Caco-2 (cell line): ENCODE measurements at regions of chr4 and their contacts with region 1.

Region 1: DNA sequence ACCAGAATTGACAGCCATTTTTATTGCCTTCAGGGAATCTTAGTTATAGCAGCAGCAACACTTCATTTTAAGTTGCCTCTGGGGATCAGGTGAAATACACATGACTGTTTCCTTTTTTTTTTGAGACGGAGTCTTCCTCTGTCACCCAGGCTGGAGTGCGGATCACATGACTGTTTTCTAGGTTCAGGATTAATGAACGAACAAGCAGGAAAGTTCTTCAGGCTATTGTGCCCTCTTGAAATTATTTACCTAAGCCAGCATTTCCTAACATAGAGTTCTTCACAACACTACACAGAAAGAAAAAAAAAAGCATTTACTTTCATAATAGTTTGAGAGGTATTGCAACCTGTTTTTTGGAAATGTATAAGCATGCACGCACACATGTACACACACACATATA is 2032.8 kb downstream of the PCDH7 start:
- DNase-seq: no peak
- H3K4me3 ChIP-seq: no peak overlapping the region
- H3K4me3 Mint-ChIP-seq: no peak overlapping the region
- H3K27ac Mint-ChIP-seq: no peak overlapping the region
- H3K4me1 ChIP-seq: no peaks in the 10 kb centered on the region
- H3K4me1 Mint-ChIP-seq: no peaks in the 10 kb centered on the region
- H3K27me3 ChIP-seq: no peaks in the 10 kb centered on the region
- H3K27me3 Mint-ChIP-seq: no peaks in the 10 kb centered on the region
- CTCF ChIP-seq: no peak

Region 2: GRCh38 chr4:32768664-32769389 is 15.9 kb after region 1 on chr4:
- CTCF ChIA-PET with region 1: no interaction called
- POLR2A ChIA-PET with region 1: no interaction called
- intact Hi-C with region 1: loop called (anchors 1 kb)
- DNase-seq: no peak
- H3K4me3 ChIP-seq: no peak overlapping the region
- H3K4me3 Mint-ChIP-seq: no peak overlapping the region
- H3K27ac Mint-ChIP-seq: no peak overlapping the region
- H3K4me1 ChIP-seq: peaks cover 7% of the 10 kb centered on the region; the same call in 1 of the 2 replicates
- H3K4me1 Mint-ChIP-seq: peaks cover 7% of the 10 kb centered on the region
- H3K27me3 ChIP-seq: no peaks in the 10 kb centered on the region
- H3K27me3 Mint-ChIP-seq: no peaks in the 10 kb centered on the region
- CTCF ChIP-seq: no peak

Region 3: GRCh38 chr4:33013282-33013681 is 260.3 kb after region 1 on chr4:
- CTCF ChIA-PET with region 1: no interaction called
- POLR2A ChIA-PET with region 1: no interaction called
- intact Hi-C with region 1: no loop called
- DNase-seq: no peak
- H3K4me3 ChIP-seq: no peak overlapping the region
- H3K4me3 Mint-ChIP-seq: no peak overlapping the region
- H3K27ac Mint-ChIP-seq: no peak overlapping the region
- H3K4me1 ChIP-seq: no peaks in the 10 kb centered on the region
- H3K4me1 Mint-ChIP-seq: no peaks in the 10 kb centered on the region
- H3K27me3 ChIP-seq: no peaks in the 10 kb centered on the region
- H3K27me3 Mint-ChIP-seq: no peaks in the 10 kb centered on the region
- CTCF ChIP-seq: no peak